Activated CD8-positive, alpha-beta T cell treated with anti-CD3 and anti-CD28 coated beads for 36 hours (primary cell): ENCODE measurements at regions of chr5 and their contacts with region 1.

Region 1: DNA sequence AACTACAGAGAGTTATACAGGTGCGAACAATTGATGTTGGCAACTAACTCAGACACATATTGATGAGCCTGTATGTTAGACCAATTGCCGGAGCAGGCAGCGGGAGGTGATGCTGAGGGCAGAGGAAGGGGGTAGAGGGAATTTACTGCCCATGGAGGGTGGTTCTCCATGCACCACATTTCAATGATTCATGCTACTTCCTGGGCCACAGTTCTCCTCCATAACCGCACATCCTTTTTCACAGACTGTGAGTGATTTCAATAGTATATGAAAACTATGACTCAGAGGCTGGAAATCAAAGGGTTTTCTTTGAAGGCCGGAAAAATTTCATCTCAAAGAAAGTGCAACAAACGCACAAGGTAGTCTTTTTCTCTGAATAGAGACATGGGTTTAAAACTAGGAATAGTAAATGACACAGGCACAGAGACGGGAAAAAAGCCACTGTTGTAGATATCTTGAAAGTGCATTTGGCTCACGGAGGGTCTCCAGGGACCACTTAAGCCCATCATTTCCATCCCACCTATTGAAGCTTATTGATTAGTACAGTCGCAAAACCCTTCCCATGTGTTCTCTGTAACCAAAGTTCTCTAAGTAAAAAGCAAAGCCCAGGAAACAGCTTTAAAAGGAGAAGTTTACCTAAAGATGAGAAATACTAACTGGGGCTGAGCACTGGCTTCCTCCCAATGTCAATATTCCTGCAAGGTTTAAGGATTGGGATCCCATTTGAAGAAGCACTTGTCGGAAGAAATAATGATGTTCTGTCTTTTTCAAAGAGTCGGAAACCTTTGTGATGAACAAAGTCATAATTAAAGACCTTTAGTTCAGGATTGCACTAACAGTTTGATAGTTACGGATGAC is 28.0 kb upstream of the ADAM19 start:
- DNase-seq: peak; percentile 75
- ATAC-seq: peak; percentile 52
- H3K4me3 Mint-ChIP-seq: peak overlapping the region; percentile 32
- H3K27ac Mint-ChIP-seq: peak overlapping the region; percentile 80
- H3K4me1 Mint-ChIP-seq: peaks cover 75% of the 10 kb centered on the region
- H3K27me3 Mint-ChIP-seq: no peaks in the 10 kb centered on the region
- CTCF ChIP-seq: no peak

Region 2: DNA sequence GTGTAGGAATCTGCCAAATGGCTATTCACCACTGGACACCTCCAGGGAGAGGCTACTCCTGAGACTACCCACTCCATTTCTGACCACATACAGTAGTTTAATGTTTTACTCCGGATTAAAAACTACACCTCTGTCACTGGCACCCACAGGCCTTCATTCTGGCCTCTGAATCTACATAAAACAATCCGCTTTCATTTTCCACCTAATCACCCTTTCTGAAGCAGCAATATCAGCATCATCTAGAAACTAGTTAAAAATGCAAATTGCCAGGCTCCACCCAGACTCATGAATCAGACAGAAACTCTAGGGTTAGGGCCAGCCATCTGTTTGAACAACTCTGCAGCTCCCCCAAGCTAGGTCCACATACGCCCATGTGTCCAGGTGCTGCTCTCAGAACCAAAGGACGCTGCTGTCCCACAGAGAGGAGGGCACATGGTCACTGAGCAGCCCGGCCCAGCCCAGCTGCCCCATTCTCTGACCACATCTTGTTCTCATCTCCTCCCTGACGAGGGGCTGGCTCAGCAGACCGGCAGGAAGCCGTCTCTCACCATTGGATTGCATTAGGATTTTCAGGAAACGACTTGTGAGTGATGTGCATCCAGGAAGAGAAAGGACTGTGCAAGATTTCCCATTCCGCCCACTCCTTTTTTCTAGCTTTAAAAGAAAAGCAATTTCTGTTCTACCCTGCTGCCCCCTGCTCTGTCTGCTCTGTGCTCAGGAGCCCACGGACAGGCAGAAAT is 62.7 kb before region 1 on chr5:
- CTCF ChIA-PET with region 1: no interaction called
- POLR2A ChIA-PET with region 1: interaction called, 9 read pairs
- intact Hi-C with region 1: loop called (anchors 2 kb)
- DNase-seq: peak; percentile 64
- ATAC-seq: peak; percentile 92
- H3K4me3 Mint-ChIP-seq: peak overlapping the region; percentile 38
- H3K27ac Mint-ChIP-seq: peak overlapping the region; percentile 85
- H3K4me1 Mint-ChIP-seq: peaks cover 57% of the 10 kb centered on the region
- H3K27me3 Mint-ChIP-seq: no peaks in the 10 kb centered on the region
- CTCF ChIP-seq: no peak

Region 3: DNA sequence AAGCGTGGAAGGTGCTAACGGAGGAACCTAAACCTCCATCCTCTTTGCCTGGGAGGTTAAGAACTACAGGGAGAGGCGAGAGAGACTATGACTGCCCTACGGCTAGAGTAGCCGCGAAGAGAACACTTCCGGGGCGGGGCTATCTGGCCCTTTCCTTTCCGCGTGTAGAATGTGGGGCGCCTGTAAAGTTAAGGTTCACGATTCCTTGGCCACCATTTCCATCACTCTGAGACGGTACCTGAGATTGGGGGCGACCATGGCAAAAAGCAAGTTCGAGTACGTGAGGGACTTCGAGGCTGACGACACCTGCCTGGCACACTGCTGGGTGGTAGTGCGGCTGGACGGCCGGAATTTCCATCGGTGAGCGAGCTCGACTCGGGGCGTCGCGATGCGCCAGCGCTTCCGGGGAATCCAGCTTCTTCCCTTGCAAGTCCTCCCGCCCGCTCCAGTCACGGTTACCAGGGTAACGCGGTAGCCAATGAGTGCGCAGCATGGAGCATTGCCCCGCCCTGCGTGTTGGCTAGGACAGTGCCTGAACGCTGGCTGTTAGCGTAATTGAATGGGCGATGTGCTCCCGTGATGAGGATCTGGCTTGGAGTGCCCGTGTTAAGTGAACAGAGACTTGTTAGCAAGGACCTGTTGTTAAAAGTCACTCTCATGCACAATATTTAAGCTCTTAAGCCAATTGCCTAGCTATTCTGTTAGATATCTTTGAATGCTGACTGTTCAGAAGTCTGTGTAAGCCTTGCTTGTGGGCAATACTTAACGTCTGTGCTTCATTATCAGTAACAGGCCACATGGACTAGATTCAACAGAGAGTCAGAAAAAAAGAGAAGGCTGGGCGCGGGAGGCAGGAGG is 127.9 kb after region 1 on chr5 and contains the start of gene THG1L:
- CTCF ChIA-PET with region 1: no interaction called
- POLR2A ChIA-PET with region 1: interaction called, 4 read pairs
- intact Hi-C with region 1: loop called (anchors 2 kb)
- DNase-seq: peak; percentile 99
- ATAC-seq: peak; percentile 92
- H3K4me3 Mint-ChIP-seq: peak within 1 kb of the TSS; percentile 92
- H3K27ac Mint-ChIP-seq: peak within 1 kb of the TSS; percentile 98
- H3K4me1 Mint-ChIP-seq: peaks cover 26% of the 10 kb centered on the region
- H3K27me3 Mint-ChIP-seq: no peaks in the 10 kb centered on the region
- CTCF ChIP-seq: no peak
- total RNA-seq, gene THG1L: 24.9 to 26.6 TPM